Kidney (tissue), 22 donors: ENCODE measurements at regions of chr6 and their contacts with region 1.

Region 1: GRCh38 chr6:106574741-106575458 is 54.4 kb downstream of the RTN4IP1 start:
- DNase-seq: no peak
- H3K4me3 ChIP-seq: no peak overlapping the region
- H3K27ac ChIP-seq: no peak overlapping the region
- H3K4me1 ChIP-seq: no peaks in the 10 kb centered on the region
- H3K27me3 ChIP-seq: no peaks in the 10 kb centered on the region
- CTCF ChIP-seq: no peak

Region 2: DNA sequence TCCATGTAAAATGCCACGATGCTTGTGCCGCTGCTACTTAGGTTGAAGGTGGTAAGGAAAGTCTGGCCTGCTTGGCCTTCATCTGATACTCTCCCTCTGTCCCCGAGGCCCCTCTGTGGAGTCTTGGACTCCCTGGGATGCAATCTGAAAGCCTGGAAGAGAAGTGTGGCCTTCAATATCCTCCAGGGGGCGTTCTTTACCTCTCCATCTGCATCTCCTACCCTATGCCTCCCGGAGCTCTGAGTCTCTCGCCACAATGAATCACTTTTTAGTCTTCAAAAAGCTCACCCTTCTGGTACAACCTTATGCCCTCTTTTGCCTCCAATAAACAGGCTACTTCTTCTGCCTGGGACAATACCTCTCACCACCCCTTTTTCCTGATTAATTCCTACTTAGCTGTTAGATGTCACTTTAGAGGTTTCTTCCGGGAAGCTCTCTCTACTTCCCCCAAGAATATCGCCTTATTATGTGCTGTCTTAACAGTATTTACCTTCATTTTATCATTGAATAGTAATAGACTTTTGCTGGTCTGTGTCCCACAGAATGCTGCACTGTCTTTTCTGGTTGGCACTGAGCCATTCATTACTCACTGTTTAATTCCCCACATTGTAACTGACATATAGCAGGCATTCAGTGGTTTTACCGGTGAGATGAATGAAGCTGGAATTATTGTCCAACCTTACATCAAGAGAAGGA is 235.4 kb before region 1 on chr6:
- intact Hi-C with region 1: loop called (anchors 10 kb)
- DNase-seq: peak in 4 of 5 donors; percentile 55 to 74 (median 63)
- H3K4me3 ChIP-seq: no peak overlapping the region
- H3K27ac ChIP-seq: no peak overlapping the region
- H3K4me1 ChIP-seq: no peaks in the 10 kb centered on the region
- H3K27me3 ChIP-seq: no peaks in the 10 kb centered on the region
- CTCF ChIP-seq: peak; percentile 58

Region 3: GRCh38 chr6:106757267-106757666 is 182.4 kb after region 1 on chr6:
- intact Hi-C with region 1: no loop called
- DNase-seq: no peak
- H3K4me3 ChIP-seq: no peak overlapping the region
- H3K27ac ChIP-seq: no peak overlapping the region
- H3K4me1 ChIP-seq: no peaks in the 10 kb centered on the region
- H3K27me3 ChIP-seq: no peaks in the 10 kb centered on the region
- CTCF ChIP-seq: no peak